ENCODE measurements at regions of chr2 and their contacts with region 1.

Region 1: DNA sequence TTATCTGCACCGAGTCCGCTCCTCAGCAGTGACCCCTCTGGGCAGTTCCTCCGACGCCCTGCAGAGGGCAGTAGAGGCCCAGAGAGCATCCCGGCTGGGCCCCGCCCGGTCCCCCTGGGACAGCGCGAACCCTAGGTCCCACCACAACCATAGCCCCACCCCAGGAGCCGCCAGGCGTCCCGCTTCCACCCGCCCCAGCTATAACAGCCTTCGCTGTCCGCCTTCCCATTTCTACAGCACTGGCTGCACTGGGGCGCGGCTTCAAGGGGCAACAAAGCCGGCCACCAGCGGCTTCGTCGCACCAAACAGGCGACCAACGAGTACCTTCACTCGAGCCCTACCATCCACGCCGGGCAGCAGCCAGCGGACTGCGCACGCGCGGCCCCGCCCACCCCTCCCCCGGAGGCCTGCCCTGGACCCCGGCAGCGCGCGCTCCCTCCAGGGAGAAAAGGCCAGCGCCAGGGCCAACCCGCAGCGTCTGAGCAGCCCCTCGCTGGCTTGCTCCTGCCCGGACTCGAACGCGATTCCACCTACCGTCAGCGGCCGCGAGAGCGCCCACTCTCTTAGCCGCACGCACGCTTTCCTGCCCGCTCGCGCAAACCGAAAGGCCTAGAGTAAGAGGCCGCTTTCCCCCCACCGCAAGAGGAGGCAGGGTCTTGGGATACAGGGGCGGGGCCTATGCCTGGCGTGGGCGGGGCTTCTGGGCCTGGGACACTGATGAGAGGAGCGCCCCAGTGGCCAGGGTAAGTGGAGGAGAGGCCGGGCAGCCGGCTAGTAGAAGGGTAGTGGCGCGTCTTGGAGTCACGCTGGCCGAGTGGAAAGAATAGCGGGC is at the start of gene NHEJ1:
- DNase-seq: peak; percentile 89
- H3K4me3 Mint-ChIP-seq: peak within 1 kb of the TSS; percentile 90
- H3K27ac Mint-ChIP-seq: peak within 1 kb of the TSS; percentile 99
- H3K4me1 Mint-ChIP-seq: peaks cover 20% of the 10 kb centered on the region
- H3K27me3 Mint-ChIP-seq: no peaks in the 10 kb centered on the region
- total RNA-seq, gene NHEJ1: 18.1 and 20.7 TPM in 2 replicates

Region 2: GRCh38 chr2:218710687-218711549 is 449.5 kb before region 1 on chr2 and contains the start of gene TTLL4:
- intact Hi-C with region 1: loop called (anchors 1 kb)
- DNase-seq: peak; percentile 99
- H3K4me3 Mint-ChIP-seq: peak within 1 kb of the TSS; percentile 94
- H3K27ac Mint-ChIP-seq: peak within 1 kb of the TSS; percentile 87
- H3K4me1 Mint-ChIP-seq: peaks cover 27% of the 10 kb centered on the region
- H3K27me3 Mint-ChIP-seq: peaks cover 12% of the 10 kb centered on the region
- total RNA-seq, gene TTLL4: 70.6 and 78.3 TPM in 2 replicates

Region 3: GRCh38 chr2:219206442-219207253 is 46.2 kb after region 1 on chr2 and contains the start of gene ZFAND2B:
- intact Hi-C with region 1: loop called (anchors 1 kb)
- DNase-seq: peak; percentile 96
- H3K4me3 Mint-ChIP-seq: peak within 1 kb of the TSS; percentile 92
- H3K27ac Mint-ChIP-seq: peak within 1 kb of the TSS; percentile 99
- H3K4me1 Mint-ChIP-seq: peaks cover 40% of the 10 kb centered on the region
- H3K27me3 Mint-ChIP-seq: no peaks in the 10 kb centered on the region
- total RNA-seq, gene ZFAND2B: 35.0 and 41.3 TPM in 2 replicates

Region 4: DNA sequence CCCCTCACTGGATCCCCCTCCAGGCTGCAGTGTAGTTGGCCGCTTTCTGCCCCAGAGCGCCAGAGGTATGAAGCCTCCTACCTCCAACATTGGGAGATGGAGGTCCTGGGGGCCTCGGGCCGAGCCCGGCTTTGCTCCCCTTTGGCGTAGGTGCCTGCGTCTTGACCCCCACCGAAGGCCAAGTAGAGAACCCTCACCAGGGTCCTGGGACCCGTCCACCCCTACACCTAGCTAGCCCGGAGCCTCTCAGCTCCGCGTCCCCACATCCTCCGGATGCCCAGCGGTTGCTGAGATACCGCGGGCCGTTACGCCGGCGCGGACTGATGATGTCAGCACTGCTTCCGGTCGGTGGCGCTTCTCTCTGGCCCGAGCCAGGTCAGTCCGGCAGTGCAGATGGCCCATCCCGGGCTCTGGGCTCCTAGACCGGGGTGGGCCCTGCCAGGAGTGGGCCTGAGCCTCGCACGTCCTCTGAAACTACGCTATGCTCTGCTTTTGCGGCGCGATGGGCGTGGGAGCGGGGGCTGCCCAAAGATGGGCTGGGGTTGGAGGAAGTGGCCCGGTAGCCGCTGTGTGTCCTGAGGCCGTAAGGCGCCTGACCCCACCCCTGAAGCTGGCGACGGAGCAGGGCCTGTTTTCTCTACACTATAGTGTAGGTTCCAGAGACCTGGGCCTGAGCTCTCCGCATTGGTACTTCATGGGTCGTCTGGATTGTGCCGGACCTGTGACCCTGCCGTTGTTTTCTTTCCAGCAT is 84.9 kb after region 1 on chr2 and contains the starts of genes GLB1L and STK16:
- intact Hi-C with region 1: loop called (anchors 2 kb)
- DNase-seq: peak; percentile 89
- H3K4me3 Mint-ChIP-seq: peak within 1 kb of the TSS; percentile 99
- H3K27ac Mint-ChIP-seq: peak within 1 kb of the TSS; percentile 99
- H3K4me1 Mint-ChIP-seq: peaks cover 57% of the 10 kb centered on the region
- H3K27me3 Mint-ChIP-seq: no peaks in the 10 kb centered on the region
- total RNA-seq, gene GLB1L: 4.6 and 4.9 TPM in 2 replicates
- total RNA-seq, gene STK16: 30.1 and 30.6 TPM in 2 replicates

Region 5: DNA sequence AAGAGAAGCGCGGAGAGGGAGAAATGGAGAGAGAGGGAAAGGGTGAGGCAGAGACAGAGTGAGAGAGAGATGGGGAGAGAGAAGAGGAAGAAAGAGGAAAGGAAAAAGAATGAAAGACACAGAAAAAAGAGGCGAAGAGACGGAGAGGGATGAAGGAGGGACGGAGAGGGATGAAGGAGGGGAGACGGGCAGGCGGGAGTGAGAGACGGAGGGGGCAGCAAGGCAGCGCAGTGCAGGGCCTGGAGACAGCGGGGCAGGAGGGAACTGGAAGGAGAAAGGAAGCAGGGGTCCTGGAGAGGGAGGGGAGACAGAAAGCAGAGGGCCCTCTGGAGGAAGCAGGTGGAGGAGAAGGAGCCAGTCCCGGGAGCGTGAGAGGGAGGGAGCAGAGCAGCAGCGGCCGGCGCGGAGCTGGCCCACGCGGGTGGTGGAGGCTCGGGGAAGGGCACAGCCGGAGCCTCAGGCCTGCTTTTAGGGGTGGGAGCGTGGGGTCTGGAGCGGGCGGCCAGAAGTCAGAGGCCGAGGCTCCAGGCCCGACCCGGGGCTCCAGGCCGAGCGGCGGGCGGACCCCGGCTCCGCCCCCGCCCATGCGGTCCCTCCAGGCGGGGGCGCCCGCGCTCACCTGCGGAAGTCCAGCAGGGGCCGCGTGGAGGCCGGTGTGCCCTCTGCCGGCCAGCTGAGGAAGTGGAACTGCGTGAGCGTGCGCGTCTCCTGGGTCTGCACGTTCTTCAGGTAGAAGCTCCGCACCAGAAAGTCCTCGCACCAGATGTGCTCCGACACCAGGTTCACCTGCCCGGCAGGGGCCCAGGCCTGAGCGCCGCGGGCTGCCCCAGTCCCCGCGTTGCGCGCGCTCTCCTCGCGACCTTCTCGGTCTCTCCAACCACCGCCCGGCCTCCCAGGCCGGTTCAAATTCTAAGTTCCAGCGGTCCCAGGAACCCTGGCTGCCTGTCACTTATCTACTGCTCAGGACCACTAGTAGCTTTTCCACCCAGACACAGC is 134.3 kb after region 1 on chr2:
- intact Hi-C with region 1: loop called (anchors 1 kb)
- DNase-seq: peak; percentile 87
- H3K4me3 Mint-ChIP-seq: peak overlapping the region; percentile 80
- H3K27ac Mint-ChIP-seq: peak overlapping the region; percentile 87
- H3K4me1 Mint-ChIP-seq: peaks cover 14% of the 10 kb centered on the region
- H3K27me3 Mint-ChIP-seq: peaks cover 17% of the 10 kb centered on the region

Region 6: DNA sequence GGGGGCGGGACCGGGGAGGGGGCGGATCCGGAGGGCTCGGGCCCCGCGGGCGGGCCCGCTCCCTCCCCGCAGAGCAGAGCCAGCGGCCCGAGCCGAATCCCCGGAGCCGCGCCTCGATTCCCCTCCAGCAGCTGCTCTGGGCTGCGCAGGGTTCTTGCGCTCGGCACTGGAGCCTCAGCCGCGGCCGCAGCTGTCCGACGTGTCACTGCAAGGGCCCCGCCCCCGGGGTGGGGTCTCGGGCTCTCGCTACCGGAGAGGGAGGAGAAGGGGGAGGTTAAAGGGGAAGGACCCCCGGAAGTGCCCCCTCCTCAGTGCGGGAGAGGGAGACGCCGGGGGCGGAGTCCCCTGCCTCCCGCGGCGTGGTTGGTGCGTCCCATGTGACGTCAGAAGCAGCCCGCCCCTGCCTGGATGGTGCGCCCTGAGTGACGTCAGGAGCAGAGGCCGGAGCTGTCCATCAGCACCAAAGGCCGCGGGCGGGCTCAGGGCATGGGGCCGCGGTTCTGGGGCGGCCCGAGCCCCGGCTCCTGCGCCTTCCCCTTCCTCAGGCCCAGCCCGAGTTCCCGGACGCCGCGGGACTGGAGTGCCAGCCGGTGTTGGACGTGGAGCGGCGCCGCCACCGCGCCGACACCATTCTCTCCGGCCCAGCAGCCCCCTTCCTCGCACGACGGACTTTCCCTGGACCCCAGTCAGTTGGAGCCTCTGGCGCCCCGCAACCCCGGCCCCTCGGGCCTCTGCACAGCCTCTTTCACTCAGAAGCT is 383.4 kb after region 1 on chr2 and contains the starts of genes CHPF and TMEM198:
- intact Hi-C with region 1: loop called (anchors 2 kb)
- DNase-seq: peak; percentile 94
- H3K4me3 Mint-ChIP-seq: peak within 1 kb of the TSS; percentile 93
- H3K27ac Mint-ChIP-seq: peak within 1 kb of the TSS; percentile 85
- H3K4me1 Mint-ChIP-seq: peaks cover 20% of the 10 kb centered on the region
- H3K27me3 Mint-ChIP-seq: peaks cover 25% of the 10 kb centered on the region
- total RNA-seq, gene CHPF: 41.3 and 43.4 TPM in 2 replicates
- total RNA-seq, gene TMEM198: 2.9 and 3.3 TPM in 2 replicates